ENCODE measurements at regions of chr21 and their contacts with region 1.

Region 1: GRCh38 chr21:29024474-29025327 is at the start of gene USP16:
- DNase-seq: peak; percentile 98
- H3K4me3 ChIP-seq: peak within 1 kb of the TSS; percentile 57 to 72 (median 65)
- H3K27ac ChIP-seq: peak within 1 kb of the TSS; percentile 93 to 98 (median 95)
- H3K4me1 ChIP-seq: peaks cover 0 to 21% (median 16%) of the 10 kb centered on the region in 4 donors
- H3K27me3 ChIP-seq: no peaks in the 10 kb centered on the region
- CTCF ChIP-seq: peak in 1 of 4 experiments; percentile 31
- EP300 ChIP-seq: peak in 1 of 4 donors; percentile 12
- POLR2A ChIP-seq: peak; percentile 11 to 17
- total RNA-seq, gene USP16: 37.8 to 53.5 (median 39.7) TPM

Region 2: DNA sequence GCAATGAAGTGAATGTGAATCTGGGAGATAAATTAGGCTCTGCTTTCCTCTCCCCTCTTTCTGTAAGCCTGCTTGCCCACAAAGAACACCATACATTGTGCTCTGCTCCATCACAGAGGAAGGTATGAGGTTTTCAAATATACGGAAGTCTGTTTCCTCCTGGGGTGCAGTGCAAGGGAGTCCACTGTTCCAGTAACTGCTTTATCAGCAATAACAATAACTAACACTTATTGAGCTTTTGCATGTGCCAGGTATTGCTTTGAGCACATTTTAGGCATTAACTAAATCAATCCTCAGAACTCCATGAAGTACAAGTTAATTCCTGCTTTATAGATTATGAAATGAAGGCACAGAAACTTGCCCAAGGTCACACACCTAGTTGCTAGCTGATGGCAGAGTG is 42.1 kb before region 1 on chr21:
- intact Hi-C with region 1: no loop called
- DNase-seq: no peak
- H3K4me3 ChIP-seq: no peak overlapping the region
- H3K27ac ChIP-seq: no peak overlapping the region
- H3K4me1 ChIP-seq: no peaks in the 10 kb centered on the region
- H3K27me3 ChIP-seq: no peaks in the 10 kb centered on the region
- CTCF ChIP-seq: no peak
- EP300 ChIP-seq: no peak
- POLR2A ChIP-seq: no peak

Region 3: DNA sequence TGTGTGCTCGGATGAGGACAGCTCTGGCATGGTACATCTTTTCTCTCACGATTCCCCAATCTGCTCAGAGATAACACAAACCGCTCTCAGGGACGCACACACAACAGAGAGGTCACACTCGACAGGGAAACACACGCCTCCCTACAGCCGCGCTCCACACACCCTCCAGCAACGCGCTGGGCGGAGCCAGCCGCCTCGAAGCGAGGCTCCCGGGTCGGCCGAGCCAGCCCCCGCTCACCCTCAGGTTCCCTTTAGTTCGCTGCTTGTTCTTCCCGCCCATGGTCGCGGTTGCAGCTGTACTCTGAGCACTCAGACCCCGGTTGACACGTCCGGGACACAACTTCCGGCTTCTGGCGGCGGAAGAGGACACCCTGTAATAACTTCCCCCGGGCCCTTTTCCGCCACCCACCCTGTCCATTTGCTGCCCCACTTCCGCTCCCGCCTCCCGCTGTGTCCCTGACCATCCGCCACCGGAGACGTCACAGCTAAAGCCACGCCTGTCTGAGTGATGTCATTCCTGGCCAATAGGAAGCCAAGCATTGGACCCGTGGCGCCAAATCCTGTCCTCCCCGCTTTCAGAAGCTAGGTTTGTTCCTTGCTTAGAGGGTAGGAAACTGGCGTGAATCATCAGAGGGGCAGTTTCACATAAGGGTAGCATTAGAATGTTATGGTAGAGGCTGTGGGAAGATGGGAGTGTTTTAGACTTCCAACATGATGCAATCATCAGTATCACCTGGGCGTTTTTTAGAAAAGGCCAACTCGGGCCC is 32.0 kb before region 1 on chr21 and contains the start of gene LTN1:
- intact Hi-C with region 1: loop called (anchors 2 kb)
- DNase-seq: peak; percentile 100
- H3K4me3 ChIP-seq: peak within 1 kb of the TSS; percentile 82 to 95 (median 90)
- H3K27ac ChIP-seq: peak within 1 kb of the TSS; percentile 88 to 92 (median 91)
- H3K4me1 ChIP-seq: peaks cover 0 to 24% (median 17%) of the 10 kb centered on the region in 4 donors
- H3K27me3 ChIP-seq: no peaks in the 10 kb centered on the region
- CTCF ChIP-seq: no peak
- EP300 ChIP-seq: no peak
- POLR2A ChIP-seq: peak; percentile 33 to 34
- total RNA-seq, gene LTN1: 19.4 to 31.0 (median 24.5) TPM

Region 4: GRCh38 chr21:29002442-29003144 is 22.1 kb before region 1 on chr21:
- intact Hi-C with region 1: loop called (anchors 1 kb)
- DNase-seq: peak; percentile 98
- H3K4me3 ChIP-seq: peak overlapping the region; percentile 48 to 70 (median 64)
- H3K27ac ChIP-seq: peak overlapping the region; percentile 86 to 97 (median 94)
- H3K4me1 ChIP-seq: peaks cover 0 to 10% (median 6%) of the 10 kb centered on the region in 4 donors
- H3K27me3 ChIP-seq: no peaks in the 10 kb centered on the region
- CTCF ChIP-seq: no peak
- EP300 ChIP-seq: no peak
- POLR2A ChIP-seq: peak; percentile 97 to 99

Region 5: GRCh38 chr21:29073222-29074006 is 48.7 kb after region 1 on chr21 and contains the start of gene CCT8:
- intact Hi-C with region 1: loop called (anchors 5 kb)
- DNase-seq: peak; percentile 99
- H3K4me3 ChIP-seq: peak within 1 kb of the TSS; percentile 90 to 99 (median 92)
- H3K27ac ChIP-seq: peak within 1 kb of the TSS; percentile 92 to 95 (median 93)
- H3K4me1 ChIP-seq: peaks cover 0 to 34% (median 27%) of the 10 kb centered on the region in 4 donors
- H3K27me3 ChIP-seq: no peaks in the 10 kb centered on the region
- CTCF ChIP-seq: no peak
- EP300 ChIP-seq: peak in 1 of 4 donors; percentile 66
- POLR2A ChIP-seq: peak; percentile 77 to 80
- total RNA-seq, gene CCT8: 67.3 to 99.1 (median 85.9) TPM

Region 6: DNA sequence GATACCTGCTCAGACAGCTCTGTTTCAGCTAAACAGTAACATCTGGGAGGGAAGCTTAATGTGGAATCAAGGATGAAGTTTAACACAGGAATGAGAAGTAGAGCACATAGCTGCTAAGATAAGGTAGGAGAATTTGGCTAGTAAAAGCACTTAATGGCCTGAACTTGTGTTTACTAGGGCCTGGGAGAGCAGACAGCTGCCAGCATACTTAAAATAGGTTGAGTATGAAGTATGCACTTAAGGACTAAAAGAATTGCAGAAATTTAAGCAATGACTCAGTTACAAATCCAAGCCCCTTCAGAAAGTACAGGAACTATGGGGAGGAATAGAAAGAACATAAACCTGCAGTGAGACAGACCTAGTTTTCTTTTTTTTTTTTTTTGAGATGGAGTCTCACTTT is 327.0 kb after region 1 on chr21:
- intact Hi-C with region 1: no loop called
- DNase-seq: no peak
- H3K4me3 ChIP-seq: no peak overlapping the region
- H3K27ac ChIP-seq: peak overlapping the region in 2 of 4 donors; percentile 33 to 52
- H3K4me1 ChIP-seq: peaks cover 0 to 37% (median 27%) of the 10 kb centered on the region in 4 donors
- H3K27me3 ChIP-seq: no peaks in the 10 kb centered on the region
- CTCF ChIP-seq: no peak
- EP300 ChIP-seq: no peak
- POLR2A ChIP-seq: no peak

Measured in sigmoid colon (tissue), 7 donors.